ENCODE measurements at regions of chr9 and their contacts with region 1.

Region 1: GRCh38 chr9:6907772-6908381 is 150.1 kb downstream of the KDM4C start:
- DNase-seq: peak; percentile 13
- H3K4me3 ChIP-seq: no peak overlapping the region
- H3K27ac ChIP-seq: no peak overlapping the region
- H3K27me3 ChIP-seq: no peaks in the 10 kb centered on the region
- CTCF ChIP-seq: peak; percentile 90

Region 2: DNA sequence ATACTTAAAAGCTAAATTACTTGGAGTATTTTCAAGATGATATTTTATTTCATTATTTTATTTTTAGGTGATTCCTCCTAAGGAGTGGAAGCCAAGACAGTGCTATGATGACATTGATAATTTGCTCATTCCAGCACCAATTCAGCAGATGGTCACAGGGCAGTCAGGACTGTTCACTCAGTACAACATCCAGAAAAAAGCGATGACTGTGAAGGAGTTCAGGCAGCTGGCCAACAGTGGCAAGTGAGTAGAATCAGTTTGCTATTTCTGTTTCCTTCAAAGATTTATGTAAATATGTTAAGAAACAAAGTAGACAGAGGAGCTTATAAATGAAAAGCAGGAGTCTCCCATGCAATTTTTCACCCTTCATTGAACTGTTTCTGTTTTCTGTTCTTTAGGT is 102.3 kb before region 1 on chr9:
- CTCF ChIA-PET with region 1: no interaction called
- POLR2A ChIA-PET with region 1: no interaction called
- DNase-seq: peak; percentile 13
- H3K4me3 ChIP-seq: no peak overlapping the region
- H3K27ac ChIP-seq: no peak overlapping the region
- H3K27me3 ChIP-seq: no peaks in the 10 kb centered on the region
- CTCF ChIP-seq: no peak

Region 3: GRCh38 chr9:7186175-7186574 is 278.3 kb after region 1 on chr9:
- CTCF ChIA-PET with region 1: interaction called, 13 read pairs
- POLR2A ChIA-PET with region 1: no interaction called
- DNase-seq: no peak
- H3K4me3 ChIP-seq: no peak overlapping the region
- H3K27ac ChIP-seq: no peak overlapping the region
- H3K27me3 ChIP-seq: no peaks in the 10 kb centered on the region
- CTCF ChIP-seq: peak; percentile 71

Region 4: DNA sequence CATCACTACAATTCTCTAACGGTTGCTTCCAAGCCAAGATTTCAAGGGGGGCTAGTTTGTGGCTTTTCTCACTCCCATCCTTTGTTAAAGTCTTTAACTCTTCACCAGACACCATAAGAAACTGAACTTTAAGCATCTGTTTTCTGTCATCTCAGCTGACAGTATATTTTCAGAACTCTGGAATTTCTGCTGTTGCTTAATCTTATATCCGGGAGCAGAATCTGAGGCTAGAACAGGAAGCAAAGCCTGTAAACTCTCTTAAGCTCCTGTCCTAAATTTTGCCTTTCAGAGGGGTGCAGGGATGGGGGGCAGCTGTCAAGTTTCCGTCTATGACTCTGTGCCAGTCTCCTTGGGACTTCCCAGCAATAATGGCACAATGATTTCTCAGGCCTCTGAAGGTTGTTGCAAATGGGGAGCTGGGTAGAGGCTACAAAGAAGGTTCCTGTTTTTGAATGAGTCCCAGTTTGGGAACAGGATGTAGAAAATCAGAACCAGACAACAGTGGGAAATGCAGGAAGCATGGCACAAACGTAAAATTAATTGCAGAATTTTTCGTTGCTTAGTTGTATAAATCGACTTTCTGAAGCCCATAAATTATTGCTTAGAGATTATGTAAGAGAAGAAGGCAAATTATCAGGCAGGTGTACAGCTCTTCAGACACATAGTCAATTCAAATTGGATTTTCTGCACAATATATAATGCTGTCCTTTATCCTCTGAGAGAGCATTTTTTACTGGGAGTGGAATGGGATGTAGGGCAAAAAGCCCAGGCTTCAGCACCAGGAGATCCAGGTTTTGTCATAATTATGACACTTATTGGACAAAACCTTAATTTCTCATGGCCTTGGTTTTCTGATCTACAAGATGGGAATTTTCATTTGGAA is 460.8 kb after region 1 on chr9:
- CTCF ChIA-PET with region 1: interaction called, 11 read pairs
- POLR2A ChIA-PET with region 1: no interaction called
- DNase-seq: peak; percentile 87
- H3K4me3 ChIP-seq: no peak overlapping the region
- H3K27ac ChIP-seq: peak overlapping the region; percentile 90
- H3K27me3 ChIP-seq: no peaks in the 10 kb centered on the region
- CTCF ChIP-seq: no peak

Measured in AG04450 (cell line).